ENCODE measurements at regions of chr5 and their contacts with region 1.

Region 1: DNA sequence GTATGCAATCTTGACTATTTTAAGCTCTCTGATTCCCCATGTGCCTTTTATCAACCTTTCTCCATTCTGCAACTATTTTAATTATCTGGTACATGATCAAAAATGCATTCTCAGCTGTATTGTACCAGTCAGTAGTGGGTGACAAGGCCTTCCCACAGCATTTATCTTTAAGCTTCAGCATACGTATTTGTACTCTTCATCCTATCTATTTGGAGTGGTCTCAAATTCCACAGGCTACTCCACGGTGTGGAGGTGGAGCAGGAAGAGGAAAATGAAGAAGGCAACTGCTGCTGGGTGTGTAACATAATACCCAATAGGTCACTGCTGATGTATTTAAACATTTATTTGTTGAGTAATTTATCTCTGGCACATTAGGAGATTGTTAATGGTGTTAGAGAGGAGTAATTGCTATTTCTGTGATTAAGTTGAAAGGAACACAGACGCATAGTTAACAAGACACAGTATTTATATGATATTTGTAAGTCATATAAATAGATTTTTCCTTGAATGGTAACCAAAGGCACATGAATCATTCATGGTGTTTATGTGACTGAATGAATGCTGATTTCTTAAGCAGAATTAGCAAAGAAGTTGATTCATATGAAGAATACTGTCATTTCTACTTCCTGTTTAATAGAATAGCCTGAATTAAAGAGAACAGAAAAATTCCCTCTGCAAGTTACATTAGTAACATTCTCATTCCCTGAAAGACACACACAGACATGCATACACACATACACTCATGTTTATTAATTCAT is 153.8 kb upstream of the NR3C1 start:
- DNase-seq: no peak
- ATAC-seq: no peak
- H3K4me3 ChIP-seq: no peak overlapping the region
- H3K4me1 ChIP-seq: no peaks in the 10 kb centered on the region
- CTCF ChIP-seq: no peak

Region 2: DNA sequence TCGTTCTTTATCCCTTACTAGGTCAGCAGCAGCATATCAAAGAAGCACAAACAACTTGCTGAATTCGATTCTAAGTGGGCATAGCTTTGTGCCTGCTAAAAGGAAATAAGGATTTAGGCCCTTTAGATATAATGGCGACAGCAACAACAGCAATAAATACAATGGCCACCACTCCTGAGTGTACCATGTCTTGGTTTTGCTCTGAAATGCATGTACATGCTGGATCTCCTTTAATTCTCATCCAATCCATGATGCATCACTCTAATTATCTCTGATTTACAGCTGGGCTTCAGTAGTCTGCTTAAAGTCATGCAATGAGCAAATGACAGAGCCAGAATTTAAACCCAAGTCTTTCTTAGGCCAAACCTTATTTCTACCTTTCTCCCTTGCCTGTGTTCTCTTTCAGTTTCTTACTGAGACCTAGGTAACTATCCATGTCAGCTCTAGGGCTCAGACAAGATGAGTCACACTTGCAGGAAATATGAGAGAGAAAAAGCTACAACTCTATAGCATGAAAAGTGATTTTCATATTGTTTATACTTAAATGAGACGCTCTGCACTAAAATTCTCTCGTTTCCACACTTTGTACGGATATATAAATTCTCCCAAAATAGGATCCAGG is 366.5 kb after region 1 on chr5:
- intact Hi-C with region 1: loop called in 1 of 2 experiments (anchors 10 kb)
- DNase-seq: no peak
- ATAC-seq: peak; percentile 90
- H3K4me3 ChIP-seq: no peak overlapping the region
- H3K4me1 ChIP-seq: no peaks in the 10 kb centered on the region
- CTCF ChIP-seq: no peak

Measured in mucosa of descending colon (tissue), 3 donors.